ENCODE measurements at regions of chr13 and their contacts with region 1.

Region 1: GRCh38 chr13:32310134-32310706 is 4.9 kb downstream of the ZAR1L start:
- DNase-seq: peak; percentile 17 to 39
- H3K4me3 ChIP-seq: no peak overlapping the region
- H3K27ac ChIP-seq: no peak overlapping the region
- H3K4me1 ChIP-seq: peaks cover 6% of the 10 kb centered on the region; the same call in 1 of the 2 replicates
- H3K27me3 ChIP-seq: no peaks in the 10 kb centered on the region
- CTCF ChIP-seq: peak; percentile 77

Region 2: GRCh38 chr13:31468114-31468902 is 841.9 kb before region 1 on chr13:
- CTCF ChIA-PET with region 1: interaction called, 12 read pairs
- POLR2A ChIA-PET with region 1: no interaction called
- intact Hi-C with region 1: no loop called
- DNase-seq: no peak
- H3K4me3 ChIP-seq: no peak overlapping the region
- H3K27ac ChIP-seq: no peak overlapping the region
- H3K4me1 ChIP-seq: no peaks in the 10 kb centered on the region
- H3K27me3 ChIP-seq: peaks cover 28% of the 10 kb centered on the region
- CTCF ChIP-seq: no peak

Region 3: GRCh38 chr13:32246468-32246867 is 63.8 kb before region 1 on chr13:
- CTCF ChIA-PET with region 1: no interaction called
- POLR2A ChIA-PET with region 1: no interaction called
- intact Hi-C with region 1: loop called (anchors 1 kb)
- DNase-seq: peak; percentile 37 to 48
- H3K4me3 ChIP-seq: no peak overlapping the region
- H3K27ac ChIP-seq: no peak overlapping the region
- H3K4me1 ChIP-seq: no peaks in the 10 kb centered on the region
- H3K27me3 ChIP-seq: no peaks in the 10 kb centered on the region
- CTCF ChIP-seq: peak; percentile 75

Measured in PC-9 (cell line).